CD8-positive, alpha-beta memory T cell (primary cell): ENCODE measurements at regions of chr3 and their contacts with region 1.

Region 1: GRCh38 chr3:72818092-72818773 is 30.0 kb downstream of the SHQ1 start:
- DNase-seq: no peak
- H3K4me3 ChIP-seq: no peak overlapping the region
- H3K4me3 Mint-ChIP-seq: no peak overlapping the region
- H3K27ac ChIP-seq: no peak overlapping the region
- H3K27ac Mint-ChIP-seq: peak overlapping the region in 2 of 8 donors; percentile 7 to 21
- H3K4me1 ChIP-seq: peaks cover 23% of the 10 kb centered on the region
- H3K4me1 Mint-ChIP-seq: peaks cover 0 to 4% (median 3%) of the 10 kb centered on the region in 3 donors
- H3K27me3 ChIP-seq: no peaks in the 10 kb centered on the region
- H3K27me3 Mint-ChIP-seq: no peaks in the 10 kb centered on the region

Region 2: DNA sequence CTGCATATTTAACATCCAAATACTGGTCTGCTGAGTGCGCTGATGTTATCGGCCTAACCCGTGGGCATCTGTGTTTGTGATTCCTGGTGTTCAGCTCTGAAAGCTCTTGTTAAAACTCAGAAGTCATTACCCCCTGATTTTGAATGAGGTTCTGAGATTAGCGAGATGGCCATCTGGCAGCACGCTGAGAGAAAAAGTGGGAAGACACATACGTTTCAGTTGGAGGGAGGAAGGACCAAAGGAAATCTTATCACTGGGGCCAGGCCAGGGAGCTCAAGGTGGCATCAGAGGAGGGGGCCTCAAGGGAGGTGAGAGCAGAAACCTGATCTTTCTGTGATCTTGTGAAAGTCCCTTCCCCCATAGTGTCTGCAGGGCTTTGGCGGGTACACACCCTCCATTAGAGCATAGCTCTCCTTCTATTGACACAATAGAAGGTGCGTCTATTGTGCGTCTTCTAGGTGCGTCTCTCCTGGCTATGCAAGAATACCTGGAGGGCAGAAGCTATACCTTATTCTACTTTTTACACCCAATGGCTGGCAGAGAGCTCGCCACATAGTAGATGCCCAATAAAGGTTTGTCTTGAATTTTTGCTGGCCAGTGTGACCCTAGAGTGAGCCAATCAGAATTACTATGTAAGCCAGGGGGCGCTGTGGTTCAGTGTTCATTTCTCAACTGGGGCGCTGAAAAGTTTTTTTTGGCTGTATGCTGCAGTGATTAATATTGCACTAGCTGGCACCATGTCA is 152.4 kb before region 1 on chr3:
- CTCF ChIA-PET with region 1: interaction called, 52 read pairs
- POLR2A ChIA-PET with region 1: no interaction called
- DNase-seq: peak; percentile 21 to 55 (median 24)
- H3K4me3 ChIP-seq: no peak overlapping the region
- H3K4me3 Mint-ChIP-seq: no peak overlapping the region
- H3K27ac ChIP-seq: no peak overlapping the region
- H3K27ac Mint-ChIP-seq: no peak overlapping the region
- H3K4me1 ChIP-seq: no peaks in the 10 kb centered on the region
- H3K4me1 Mint-ChIP-seq: no peaks in the 10 kb centered on the region
- H3K27me3 ChIP-seq: no peaks in the 10 kb centered on the region
- H3K27me3 Mint-ChIP-seq: peaks cover 3 to 4% of the 10 kb centered on the region in 2 donors

Region 3: GRCh38 chr3:72738752-72739530 is 79.3 kb before region 1 on chr3:
- CTCF ChIA-PET with region 1: interaction called, 10 read pairs
- POLR2A ChIA-PET with region 1: no interaction called
- DNase-seq: peak; percentile 53 to 81 (median 64)
- H3K4me3 ChIP-seq: peak overlapping the region; percentile 71
- H3K4me3 Mint-ChIP-seq: peak overlapping the region; percentile 84 to 92 (median 88)
- H3K27ac ChIP-seq: no peak overlapping the region
- H3K27ac Mint-ChIP-seq: peak overlapping the region in 7 of 8 donors; percentile 29 to 98 (median 87)
- H3K4me1 ChIP-seq: peaks cover 21% of the 10 kb centered on the region
- H3K4me1 Mint-ChIP-seq: peaks cover 19 to 25% (median 24%) of the 10 kb centered on the region in 3 donors
- H3K27me3 ChIP-seq: no peaks in the 10 kb centered on the region
- H3K27me3 Mint-ChIP-seq: peaks cover 7 to 9% of the 10 kb centered on the region in 2 donors

Region 4: DNA sequence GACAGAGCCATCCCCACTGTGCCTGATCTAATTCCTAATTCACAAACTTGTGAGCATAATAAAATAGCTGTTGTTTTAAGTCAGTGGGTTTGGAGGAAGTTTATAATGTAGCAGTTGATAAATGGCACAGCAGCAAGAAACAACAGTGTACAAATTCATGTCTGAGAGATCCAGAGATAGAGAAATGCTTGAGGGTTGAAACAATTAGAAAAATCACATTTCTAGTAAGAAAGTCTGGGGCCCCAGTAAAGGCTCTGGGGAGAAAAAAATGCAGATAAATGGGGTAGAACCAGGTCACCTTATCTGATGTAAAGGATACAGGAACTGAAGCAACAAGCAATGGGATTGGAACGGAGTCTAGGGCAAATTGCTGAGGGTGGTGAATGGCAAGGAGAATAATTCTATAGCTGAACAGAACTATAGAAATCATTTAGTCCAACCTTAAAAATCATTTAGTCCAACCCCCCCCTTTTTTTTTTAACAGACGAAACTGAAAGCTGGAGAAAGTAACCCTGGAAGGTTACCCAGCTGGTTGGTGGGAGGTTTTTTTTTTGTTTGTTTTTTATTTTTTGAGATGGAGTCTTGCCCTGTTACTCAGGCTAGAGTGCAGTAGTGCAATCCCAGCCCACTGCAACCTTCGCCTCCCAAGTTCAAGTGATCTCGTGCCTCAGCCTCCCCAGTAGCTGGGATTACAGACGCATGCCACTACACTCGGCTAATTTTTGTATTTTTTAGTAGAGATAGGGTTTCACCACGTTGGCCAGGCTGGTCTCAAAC is 44.3 kb after region 1 on chr3:
- CTCF ChIA-PET with region 1: no interaction called
- POLR2A ChIA-PET with region 1: no interaction called
- DNase-seq: no peak
- H3K4me3 ChIP-seq: no peak overlapping the region
- H3K4me3 Mint-ChIP-seq: no peak overlapping the region
- H3K27ac ChIP-seq: no peak overlapping the region
- H3K27ac Mint-ChIP-seq: no peak overlapping the region
- H3K4me1 ChIP-seq: no peaks in the 10 kb centered on the region
- H3K4me1 Mint-ChIP-seq: no peaks in the 10 kb centered on the region
- H3K27me3 ChIP-seq: no peaks in the 10 kb centered on the region
- H3K27me3 Mint-ChIP-seq: peaks cover 7 to 10% of the 10 kb centered on the region in 2 donors